ENCODE measurements at regions of chr14 and their contacts with region 1.

Region 1: DNA sequence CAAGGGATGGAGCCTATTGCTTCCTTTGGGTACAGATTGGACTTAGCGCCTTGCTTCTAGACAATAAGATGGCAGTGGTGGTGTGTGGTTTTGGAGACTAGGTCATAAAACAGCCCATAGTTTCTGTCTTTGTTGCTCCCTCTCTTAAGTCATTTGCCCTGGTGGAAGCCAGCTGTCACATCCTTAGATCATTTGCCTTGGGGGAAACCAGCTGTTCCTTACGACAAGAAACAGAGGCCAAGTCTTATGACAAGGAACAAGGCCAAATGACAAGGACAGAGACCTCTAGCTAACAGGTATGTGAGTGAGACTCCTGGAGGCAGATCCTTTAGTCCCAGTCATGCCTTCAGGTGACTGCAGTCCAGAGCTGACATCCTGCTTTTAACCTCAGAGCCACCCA is 9.2 kb upstream of the PALS1 start:
- DNase-seq: no peak
- H3K4me3 ChIP-seq: no peak overlapping the region
- H3K27ac ChIP-seq: peak overlapping the region in 1 of 4 donors; percentile 2
- H3K4me1 ChIP-seq: peaks cover 0 to 12% (median 4%) of the 10 kb centered on the region in 4 donors
- H3K27me3 ChIP-seq: no peaks in the 10 kb centered on the region
- CTCF ChIP-seq: no peak
- EP300 ChIP-seq: no peak
- POLR2A ChIP-seq: no peak

Region 2: DNA sequence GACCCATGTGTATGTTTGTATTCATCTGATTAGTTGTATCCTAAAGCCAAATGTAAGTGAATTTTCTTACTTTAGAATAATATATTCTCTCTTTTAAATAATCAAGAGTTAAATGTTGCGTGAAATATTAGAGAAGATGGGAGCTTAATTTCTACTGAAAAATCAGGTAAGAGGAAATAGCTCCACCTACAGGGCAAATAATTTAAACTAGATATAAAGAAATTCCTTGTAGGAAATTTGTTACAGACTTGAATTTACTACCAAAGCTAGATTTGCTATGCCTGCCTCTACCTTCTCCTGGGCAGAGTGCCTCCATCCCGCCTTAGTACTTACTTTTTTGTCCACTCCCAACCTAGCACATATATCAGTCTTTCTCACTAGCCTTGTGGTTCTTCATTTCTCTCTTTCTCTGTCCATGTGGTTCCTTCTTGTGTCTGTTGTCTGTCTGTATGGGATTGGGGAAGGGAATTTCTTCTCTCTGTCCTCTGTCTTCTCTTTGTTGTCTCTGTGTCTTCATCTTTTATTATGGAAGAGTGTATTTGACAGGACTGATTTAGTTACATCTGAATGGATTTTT is 53.9 kb after region 1 on chr14:
- intact Hi-C with region 1: loop called (anchors 10 kb)
- DNase-seq: no peak
- H3K4me3 ChIP-seq: no peak overlapping the region
- H3K27ac ChIP-seq: no peak overlapping the region
- H3K4me1 ChIP-seq: peaks cover 0 to 8% (median 5%) of the 10 kb centered on the region in 4 donors
- H3K27me3 ChIP-seq: no peaks in the 10 kb centered on the region
- CTCF ChIP-seq: peak; percentile 54 to 64 (median 63)
- EP300 ChIP-seq: no peak
- POLR2A ChIP-seq: no peak

Region 3: DNA sequence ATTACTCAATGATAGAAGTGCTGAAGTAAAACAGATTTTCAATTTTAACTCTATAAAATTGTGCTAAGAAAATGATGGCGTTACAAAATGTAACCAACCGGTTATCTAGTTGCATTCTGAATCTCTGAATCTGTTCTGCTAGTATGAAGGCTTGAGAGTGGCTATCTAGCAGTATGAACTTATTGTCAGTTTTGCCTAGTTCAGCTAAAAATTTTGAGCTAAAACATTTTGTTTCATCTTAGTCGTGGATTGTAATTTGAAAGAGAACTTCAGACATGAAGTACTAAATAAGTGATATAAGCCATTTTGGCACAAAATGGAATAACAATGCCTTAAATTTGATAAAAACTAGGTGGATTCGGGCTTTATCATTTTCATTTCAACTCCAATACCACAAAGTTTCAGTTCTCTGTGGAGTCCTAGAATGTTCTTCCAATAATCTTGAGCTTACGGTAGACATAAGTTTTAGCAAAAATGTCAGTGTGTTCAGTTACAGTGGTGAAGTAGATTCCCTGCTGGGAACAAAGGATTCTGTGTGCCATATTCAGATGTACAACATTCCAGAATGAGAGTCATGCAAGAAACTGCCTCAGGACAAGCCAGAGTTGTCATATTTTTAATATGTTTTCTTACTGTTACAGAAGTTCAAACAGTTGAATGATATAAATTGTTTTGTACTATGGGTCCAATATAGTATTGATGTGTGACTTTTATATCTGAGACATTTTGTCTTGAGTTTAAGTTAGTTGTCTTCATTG is 99.5 kb after region 1 on chr14:
- intact Hi-C with region 1: no loop called
- DNase-seq: no peak
- H3K4me3 ChIP-seq: no peak overlapping the region
- H3K27ac ChIP-seq: no peak overlapping the region
- H3K4me1 ChIP-seq: no peaks in the 10 kb centered on the region
- H3K27me3 ChIP-seq: no peaks in the 10 kb centered on the region
- CTCF ChIP-seq: no peak
- EP300 ChIP-seq: no peak
- POLR2A ChIP-seq: no peak